H1 (cell line): ENCODE measurements at regions of chr5 and their contacts with region 1.

Region 1: GRCh38 chr5:141512390-141512910 is 23.6 kb downstream of the PCDHGC5 start:
- DNase-seq: peak; percentile 93 to 99
- H3K4me3 ChIP-seq: peak overlapping the region; percentile 61 to 83 (median 76)
- H3K27ac ChIP-seq: no peak overlapping the region
- H3K4me1 ChIP-seq: peaks cover 7 to 35% (median 19%) of the 10 kb centered on the region in 4 experiments
- H3K27me3 ChIP-seq: no peaks in the 10 kb centered on the region
- CTCF ChIP-seq: peak in 2 of 3 experiments; percentile 97 to 98; a peak in 3 of 4 replicates
- EP300 ChIP-seq: no peak; a peak in 1 of 3 replicates
- POLR2A ChIP-seq: peak in 1 of 2 experiments; percentile 60; a peak in 2 of 3 replicates
- RAD21 ChIP-seq: peak; percentile 80 to 86

Region 2: DNA sequence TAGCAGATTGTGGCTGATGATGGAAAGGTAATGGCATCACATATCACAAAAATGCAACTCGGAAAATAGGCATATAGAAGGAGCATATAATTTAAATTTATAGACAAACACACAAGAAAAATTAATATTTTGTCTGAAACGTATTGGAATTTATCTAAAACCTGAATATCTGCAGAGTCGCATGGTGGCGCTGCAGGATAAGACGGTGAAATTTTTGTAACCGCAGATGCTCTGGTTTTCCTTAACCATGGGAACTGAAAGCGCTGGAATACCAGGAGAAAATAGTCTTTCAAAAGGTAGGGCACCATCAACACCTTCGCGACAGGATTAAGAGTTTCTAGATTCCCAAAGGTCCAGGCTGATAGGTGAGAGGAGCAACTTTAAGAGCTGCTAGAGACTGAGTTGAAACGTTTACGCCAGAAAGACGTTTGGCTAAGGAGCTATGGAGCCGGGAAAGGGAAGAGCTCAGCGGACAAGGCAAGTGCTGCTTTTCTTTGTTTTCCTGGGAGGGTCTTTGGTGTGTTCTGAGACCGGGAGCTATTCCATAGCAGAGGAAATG is 278.3 kb before region 1 on chr5:
- CTCF ChIA-PET with region 1: interaction called, 12 read pairs
- POLR2A ChIA-PET with region 1: no interaction called
- DNase-seq: no peak
- H3K4me3 ChIP-seq: no peak overlapping the region
- H3K27ac ChIP-seq: no peak overlapping the region
- H3K4me1 ChIP-seq: no peaks in the 10 kb centered on the region
- H3K27me3 ChIP-seq: no peaks in the 10 kb centered on the region
- CTCF ChIP-seq: no peak
- EP300 ChIP-seq: no peak
- POLR2A ChIP-seq: no peak
- RAD21 ChIP-seq: peak; percentile 37 to 59

Region 3: DNA sequence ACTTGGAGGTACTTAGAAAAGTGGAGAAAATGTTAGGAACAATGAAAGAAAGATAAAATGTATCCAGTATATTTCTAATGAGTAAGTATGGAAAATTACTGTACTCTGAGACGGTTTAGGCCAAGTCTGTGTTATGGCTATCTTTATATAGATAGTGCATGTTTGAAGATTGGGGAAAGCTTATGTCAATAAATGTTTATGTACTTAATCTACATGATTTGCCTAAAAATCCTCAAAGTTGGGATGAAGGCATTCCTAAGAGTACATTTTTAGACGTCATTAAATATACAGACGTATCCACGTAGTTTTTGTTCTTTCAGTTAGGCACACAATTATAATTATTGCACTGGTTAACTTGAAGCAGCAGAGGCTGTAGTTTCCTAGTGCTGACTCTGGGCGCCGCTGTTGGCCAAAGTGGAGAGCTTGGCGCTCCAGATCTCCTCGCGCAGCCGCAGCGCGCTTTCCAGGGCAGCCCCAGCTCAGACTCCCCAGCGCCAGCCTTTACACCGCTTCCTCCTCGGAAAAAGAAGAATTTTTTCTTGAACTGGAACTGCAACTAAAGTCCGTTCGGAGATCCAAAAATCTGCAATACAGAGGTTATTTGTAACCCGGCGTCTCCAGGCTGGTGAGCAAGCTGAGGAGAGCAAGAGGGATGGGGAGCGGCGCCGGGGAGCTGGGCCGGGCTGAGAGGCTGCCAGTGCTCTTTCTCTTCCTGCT is 125.1 kb before region 1 on chr5 and contains the start of gene PCDHGB4:
- CTCF ChIA-PET with region 1: interaction called, 10 read pairs
- POLR2A ChIA-PET with region 1: interaction called, 3 read pairs
- DNase-seq: peak in 1 of 2 experiments; percentile 82
- H3K4me3 ChIP-seq: peak within 1 kb of the TSS; percentile 42 to 69 (median 44); a peak in 7 of 8 replicates
- H3K27ac ChIP-seq: no peak within 1 kb of the TSS
- H3K4me1 ChIP-seq: no peaks in the 10 kb centered on the region
- H3K27me3 ChIP-seq: no peaks in the 10 kb centered on the region; a peak in 1 of 7 replicates
- CTCF ChIP-seq: peak; percentile 56 to 66 (median 65)
- EP300 ChIP-seq: no peak
- POLR2A ChIP-seq: no peak
- RAD21 ChIP-seq: peak; percentile 59 to 67
- total RNA-seq, gene PCDHGB4: 7.8 and 9.1 TPM in 2 replicates

Region 4: DNA sequence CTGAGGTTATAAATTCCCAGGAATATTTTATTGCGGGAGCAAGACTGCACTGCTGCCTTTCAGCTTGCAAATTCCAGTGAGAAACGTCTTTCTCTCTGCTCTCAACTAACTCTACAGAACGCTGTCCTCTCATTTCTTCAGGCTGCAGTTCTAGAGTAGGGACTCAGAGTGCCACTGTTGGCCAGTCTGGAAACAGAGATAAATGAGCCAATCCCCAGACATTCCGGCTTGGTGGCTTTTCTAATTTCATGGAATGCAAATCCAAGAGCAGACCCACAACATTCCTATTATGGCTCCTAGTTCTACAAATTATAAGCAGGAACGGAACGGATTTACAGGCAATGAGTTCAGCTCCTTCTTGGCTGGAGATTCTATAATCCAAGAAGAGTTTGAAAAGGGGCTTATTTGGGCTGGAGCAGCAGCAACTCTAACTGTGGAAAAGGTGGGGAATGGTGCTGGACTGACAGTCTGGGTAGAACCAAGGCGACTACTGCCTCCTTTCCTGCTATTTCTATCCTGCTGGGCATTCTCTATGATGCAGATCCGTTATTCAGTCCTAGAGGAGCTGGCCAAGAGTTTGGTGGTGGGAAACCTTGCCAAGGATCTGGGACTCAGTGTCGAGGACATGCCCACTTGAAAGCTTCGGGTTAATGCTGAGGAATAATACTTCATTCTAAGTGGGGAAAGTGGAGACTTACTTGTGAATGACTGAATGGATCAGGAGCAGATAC is 72.9 kb before region 1 on chr5:
- CTCF ChIA-PET with region 1: interaction called, 17 read pairs
- POLR2A ChIA-PET with region 1: interaction called, 6 read pairs
- DNase-seq: no peak
- H3K4me3 ChIP-seq: no peak overlapping the region
- H3K27ac ChIP-seq: no peak overlapping the region
- H3K4me1 ChIP-seq: no peaks in the 10 kb centered on the region
- H3K27me3 ChIP-seq: no peaks in the 10 kb centered on the region
- CTCF ChIP-seq: no peak
- EP300 ChIP-seq: no peak
- POLR2A ChIP-seq: no peak
- RAD21 ChIP-seq: peak in 1 of 2 experiments; percentile 33; a peak in 2 of 4 replicates

Region 5: GRCh38 chr5:141492168-141492885 is 20.1 kb before region 1 on chr5:
- CTCF ChIA-PET with region 1: interaction called, 310 read pairs
- POLR2A ChIA-PET with region 1: interaction called, 33 read pairs
- DNase-seq: no peak
- H3K4me3 ChIP-seq: peak overlapping the region; percentile 17 to 60 (median 46)
- H3K27ac ChIP-seq: no peak overlapping the region
- H3K4me1 ChIP-seq: peaks cover 6 to 37% (median 26%) of the 10 kb centered on the region in 4 experiments
- H3K27me3 ChIP-seq: peaks cover 13 to 40% (median 36%) of the 10 kb centered on the region in 4 experiments; a peak in 6 of 7 replicates
- CTCF ChIP-seq: no peak
- EP300 ChIP-seq: no peak
- POLR2A ChIP-seq: no peak
- RAD21 ChIP-seq: no peak

Region 6: GRCh38 chr5:141605523-141606277 is 93.2 kb after region 1 on chr5:
- CTCF ChIA-PET with region 1: no interaction called
- POLR2A ChIA-PET with region 1: no interaction called
- DNase-seq: no peak
- H3K4me3 ChIP-seq: no peak overlapping the region
- H3K27ac ChIP-seq: no peak overlapping the region
- H3K4me1 ChIP-seq: no peaks in the 10 kb centered on the region; a peak in 1 of 7 replicates
- H3K27me3 ChIP-seq: no peaks in the 10 kb centered on the region
- CTCF ChIP-seq: no peak
- EP300 ChIP-seq: no peak
- POLR2A ChIP-seq: no peak
- RAD21 ChIP-seq: no peak

Region 7: DNA sequence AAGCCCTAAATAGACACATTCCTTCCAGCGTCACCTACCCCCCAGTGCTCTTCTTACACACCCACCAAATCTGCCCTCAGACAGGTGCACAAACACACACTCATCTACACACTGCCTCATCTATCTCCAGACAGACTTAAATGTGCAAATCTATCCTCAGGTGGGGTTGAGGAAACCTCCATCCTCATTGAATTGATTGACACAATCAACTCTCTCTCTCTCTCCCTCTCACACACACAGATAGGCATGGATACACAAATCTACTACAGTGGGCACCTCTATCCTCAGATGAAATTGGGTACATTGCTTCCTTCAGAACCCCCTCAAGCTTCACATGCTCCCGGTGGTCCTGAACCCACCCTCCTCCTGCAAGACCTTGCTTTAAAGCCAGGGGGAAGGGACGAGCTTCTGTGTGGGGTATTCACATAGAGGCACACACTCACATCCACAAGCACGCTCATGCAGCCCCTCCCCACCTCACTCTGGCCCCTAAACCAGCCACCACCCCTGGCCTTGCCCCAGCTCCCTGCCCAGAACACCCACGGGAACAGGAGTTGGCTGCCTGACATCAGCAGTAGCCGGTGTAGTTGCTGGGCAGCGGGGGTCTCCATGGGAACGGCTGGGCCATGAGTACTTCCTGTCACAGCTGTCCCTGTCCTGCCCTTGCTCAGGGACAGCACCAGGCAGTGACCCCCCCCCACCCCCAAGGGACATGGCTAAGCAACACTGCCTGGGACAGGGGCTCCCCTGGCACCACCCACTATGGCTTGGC is 343.0 kb after region 1 on chr5:
- CTCF ChIA-PET with region 1: no interaction called
- POLR2A ChIA-PET with region 1: no interaction called
- DNase-seq: no peak
- H3K4me3 ChIP-seq: no peak overlapping the region
- H3K27ac ChIP-seq: 0 out of 2 replicates have a peak overlapping the region, but pooled peaks have one; percentile 10
- H3K4me1 ChIP-seq: peaks cover 20 to 48% (median 37%) of the 10 kb centered on the region in 4 experiments
- H3K27me3 ChIP-seq: no peaks in the 10 kb centered on the region
- CTCF ChIP-seq: no peak
- EP300 ChIP-seq: no peak
- POLR2A ChIP-seq: no peak
- RAD21 ChIP-seq: no peak